ENCODE measurements at regions of chr12 and their contacts with region 1.

Region 1: DNA sequence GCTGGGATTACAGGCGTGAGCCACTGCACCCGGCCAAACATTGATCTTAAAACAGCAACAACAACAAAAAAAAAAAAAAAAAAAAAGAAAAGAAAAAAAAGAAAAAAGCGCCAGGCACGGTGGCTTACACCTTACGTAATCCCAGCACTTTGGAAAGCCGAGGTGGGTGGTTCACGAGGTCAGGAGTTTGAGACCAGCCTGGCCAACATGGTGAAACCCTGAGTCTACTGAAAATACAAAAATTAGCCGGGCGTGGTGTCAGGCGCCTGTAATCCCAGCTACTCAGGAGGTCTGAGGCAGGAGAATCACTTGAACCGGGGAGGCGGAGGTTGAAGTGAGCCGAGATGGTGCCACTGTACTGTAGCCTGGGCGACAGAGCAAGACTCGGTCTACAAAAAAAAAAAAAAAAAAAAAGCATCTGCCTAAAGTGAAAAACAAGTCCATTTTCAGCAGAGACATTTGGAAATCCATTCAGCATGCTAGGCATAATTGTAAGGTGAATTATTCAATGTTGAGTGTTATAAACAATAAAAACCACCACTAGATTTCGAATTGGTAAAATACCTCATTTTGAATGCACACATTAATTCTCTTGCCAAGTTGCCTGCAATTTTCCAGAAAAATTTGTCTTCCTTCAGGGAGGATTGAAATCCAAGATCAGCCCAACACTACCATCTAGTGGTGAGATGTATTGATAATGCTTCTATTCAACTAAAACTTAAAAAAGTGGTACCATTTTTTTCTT is 8.0 kb upstream of the CERS5 start:
- DNase-seq: no peak
- H3K4me3 ChIP-seq: no peak overlapping the region
- H3K27ac ChIP-seq: no peak overlapping the region
- H3K4me1 ChIP-seq: no peaks in the 10 kb centered on the region
- H3K27me3 ChIP-seq: no peaks in the 10 kb centered on the region
- CTCF ChIP-seq: peak; percentile 52 to 56

Region 2: GRCh38 chr12:50132505-50133135 is 42.5 kb before region 1 on chr12:
- CTCF ChIA-PET with region 1: no interaction called
- dilution Hi-C with region 1: no loop called
- in situ Hi-C with region 1: no loop called
- intact Hi-C with region 1: loop called (anchors 1 kb)
- DNase-seq: peak; percentile 29
- H3K4me3 ChIP-seq: no peak overlapping the region
- H3K27ac ChIP-seq: no peak overlapping the region
- H3K4me1 ChIP-seq: no peaks in the 10 kb centered on the region
- H3K27me3 ChIP-seq: no peaks in the 10 kb centered on the region
- CTCF ChIP-seq: peak; percentile 29 to 46